Mammary epithelial cell (primary cell): ENCODE measurements at regions of chr3 and their contacts with region 1.

Region 1: DNA sequence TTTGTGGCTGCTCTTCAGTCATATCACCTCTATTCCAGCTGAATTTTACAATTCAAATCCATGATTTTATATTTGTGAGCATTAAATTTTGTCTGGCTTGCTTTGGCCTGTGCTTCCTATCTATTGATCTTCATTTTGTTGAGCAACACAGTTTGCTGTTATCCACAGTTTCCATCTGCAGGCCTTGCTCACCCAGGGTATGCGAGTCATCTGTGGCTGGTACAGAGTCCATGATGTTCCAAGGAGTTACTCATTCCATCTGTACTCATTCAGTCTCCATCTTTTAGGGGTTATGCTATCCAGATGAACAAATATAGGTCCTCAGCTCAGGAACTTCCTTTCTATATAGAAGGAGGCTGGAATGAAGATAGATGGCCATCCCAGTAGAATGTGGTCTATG is 70.1 kb upstream of the CCK start:
- DNase-seq: peak; percentile 46
- H3K4me3 ChIP-seq: no peak overlapping the region
- H3K27ac ChIP-seq: no peak overlapping the region
- H3K4me1 ChIP-seq: peaks cover 10% of the 10 kb centered on the region
- H3K27me3 ChIP-seq: no peaks in the 10 kb centered on the region
- CTCF ChIP-seq: no peak

Region 2: GRCh38 chr3:42256135-42256819 is 79.8 kb before region 1 on chr3:
- CTCF ChIA-PET with region 1: no interaction called
- dilution Hi-C with region 1: no loop called
- in situ Hi-C with region 1: no loop called
- intact Hi-C with region 1: loop called (anchors 2 kb)
- DNase-seq: peak; percentile 79
- H3K4me3 ChIP-seq: no peak overlapping the region
- H3K27ac ChIP-seq: peak overlapping the region; percentile 42
- H3K4me1 ChIP-seq: peaks cover 41% of the 10 kb centered on the region
- H3K27me3 ChIP-seq: no peaks in the 10 kb centered on the region
- CTCF ChIP-seq: no peak

Region 3: GRCh38 chr3:42376344-42376798 is 40.3 kb after region 1 on chr3:
- CTCF ChIA-PET with region 1: no interaction called
- dilution Hi-C with region 1: no loop called
- in situ Hi-C with region 1: no loop called
- intact Hi-C with region 1: no loop called
- DNase-seq: peak; percentile 95
- H3K4me3 ChIP-seq: no peak overlapping the region
- H3K27ac ChIP-seq: no peak overlapping the region
- H3K4me1 ChIP-seq: peaks cover 12% of the 10 kb centered on the region
- H3K27me3 ChIP-seq: no peaks in the 10 kb centered on the region
- CTCF ChIP-seq: no peak